IMR-90 (cell line): ENCODE measurements at regions of chr3 and their contacts with region 1.

Region 1: DNA sequence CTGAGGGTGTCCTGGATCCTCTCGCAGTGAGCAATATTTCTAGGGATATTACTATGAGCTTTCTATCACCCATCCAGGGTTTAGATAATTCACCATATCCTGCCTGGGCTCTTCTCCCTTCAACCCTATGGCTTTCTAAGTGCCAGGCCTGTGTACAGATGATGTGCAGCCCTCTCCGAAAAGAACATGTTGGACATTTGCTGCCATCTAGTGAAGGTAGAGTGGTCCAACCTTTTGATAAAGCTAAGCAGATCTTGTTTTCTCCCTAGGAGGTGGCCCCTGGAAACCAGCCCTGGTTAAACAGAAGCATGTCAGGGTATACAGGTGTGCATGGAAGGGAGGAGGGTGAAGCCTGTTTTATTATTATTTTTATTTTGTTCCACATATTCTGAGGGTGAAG is 27.9 kb upstream of the SCN10A start:
- DNase-seq: peak; percentile 70
- ATAC-seq: peak; percentile 97
- H3K4me3 ChIP-seq: no peak overlapping the region
- H3K27ac ChIP-seq: no peak overlapping the region
- H3K4me1 ChIP-seq: no peaks in the 10 kb centered on the region
- H3K27me3 ChIP-seq: peaks cover 12% of the 10 kb centered on the region
- CTCF ChIP-seq: peak; percentile 76
- POLR2A ChIP-seq: no peak
- RAD21 ChIP-seq: peak; percentile 88

Region 2: GRCh38 chr3:38346587-38347410 is 497.1 kb before region 1 on chr3 and contains the start of gene XYLB:
- CTCF ChIA-PET with region 1: no interaction called
- POLR2A ChIA-PET with region 1: no interaction called
- dilution Hi-C with region 1: no loop called
- in situ Hi-C with region 1: no loop called
- intact Hi-C with region 1: loop called (anchors 5 kb)
- DNase-seq: peak; percentile 72
- ATAC-seq: peak; percentile 99
- H3K4me3 ChIP-seq: peak within 1 kb of the TSS; percentile 83
- H3K27ac ChIP-seq: peak within 1 kb of the TSS; percentile 30; the same call in 1 of the 2 replicates
- H3K4me1 ChIP-seq: no peaks in the 10 kb centered on the region
- H3K27me3 ChIP-seq: no peaks in the 10 kb centered on the region
- CTCF ChIP-seq: peak; percentile 85
- POLR2A ChIP-seq: no peak
- RAD21 ChIP-seq: peak; percentile 59
- total RNA-seq, gene XYLB: 2.5 and 3.0 TPM in 2 replicates

Region 3: DNA sequence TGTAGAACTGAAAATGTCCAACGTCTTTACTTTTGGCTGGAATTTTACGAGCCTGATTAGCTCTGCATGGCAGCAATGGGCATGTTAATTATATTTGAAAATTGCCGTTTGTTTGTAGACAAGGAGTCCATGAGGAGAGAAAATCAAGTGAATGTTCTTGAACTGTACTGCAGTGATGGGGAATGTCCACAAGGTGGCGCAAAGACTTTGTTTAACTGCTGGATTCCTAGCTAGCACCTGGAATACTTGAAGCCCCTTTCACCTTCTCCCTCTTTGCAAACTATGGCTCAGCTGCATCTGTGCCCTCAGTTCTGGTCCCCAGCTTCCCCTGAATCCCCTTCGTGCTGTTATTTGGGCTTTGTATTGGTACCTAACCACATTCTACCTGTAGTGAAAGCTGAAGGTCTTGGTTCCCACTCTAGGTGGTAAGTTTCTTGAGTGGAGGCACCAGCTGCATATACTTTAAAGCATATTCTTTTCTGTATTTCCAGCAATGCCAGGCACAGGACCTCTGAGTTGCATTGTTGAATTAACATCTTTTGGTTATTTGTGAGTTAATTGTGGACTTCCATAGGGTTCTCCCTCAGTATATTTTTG is 322.4 kb before region 1 on chr3:
- CTCF ChIA-PET with region 1: interaction called, 20 read pairs
- POLR2A ChIA-PET with region 1: no interaction called
- dilution Hi-C with region 1: no loop called
- in situ Hi-C with region 1: loop called (anchors 5 kb)
- intact Hi-C with region 1: loop called (anchors 1 kb)
- DNase-seq: peak; percentile 75
- ATAC-seq: peak; percentile 67
- H3K4me3 ChIP-seq: no peak overlapping the region
- H3K27ac ChIP-seq: no peak overlapping the region
- H3K4me1 ChIP-seq: peaks cover 5% of the 10 kb centered on the region
- H3K27me3 ChIP-seq: no peaks in the 10 kb centered on the region
- CTCF ChIP-seq: peak; percentile 84
- POLR2A ChIP-seq: no peak
- RAD21 ChIP-seq: peak; percentile 75

Region 4: GRCh38 chr3:38689774-38690173 is 154.1 kb before region 1 on chr3:
- CTCF ChIA-PET with region 1: interaction called, 3 read pairs
- POLR2A ChIA-PET with region 1: no interaction called
- dilution Hi-C with region 1: no loop called
- in situ Hi-C with region 1: no loop called
- intact Hi-C with region 1: loop called (anchors 5 kb)
- DNase-seq: peak; percentile 17
- ATAC-seq: peak; percentile 51; the same call in 1 of the 2 replicates
- H3K4me3 ChIP-seq: no peak overlapping the region
- H3K27ac ChIP-seq: no peak overlapping the region
- H3K4me1 ChIP-seq: no peaks in the 10 kb centered on the region; the same call in 1 of the 2 replicates
- H3K27me3 ChIP-seq: peaks cover 2% of the 10 kb centered on the region; the same call in 1 of the 2 replicates
- CTCF ChIP-seq: peak; percentile 25; the same call in 1 of the 2 replicates
- POLR2A ChIP-seq: no peak
- RAD21 ChIP-seq: no peak

Region 5: GRCh38 chr3:39000008-39000450 is 156.1 kb after region 1 on chr3:
- CTCF ChIA-PET with region 1: interaction called, 13 read pairs
- POLR2A ChIA-PET with region 1: no interaction called
- dilution Hi-C with region 1: no loop called
- in situ Hi-C with region 1: no loop called
- intact Hi-C with region 1: loop called (anchors 2 kb)
- DNase-seq: peak; percentile 79
- ATAC-seq: peak; percentile 78
- H3K4me3 ChIP-seq: no peak overlapping the region
- H3K27ac ChIP-seq: no peak overlapping the region
- H3K4me1 ChIP-seq: peaks cover 1% of the 10 kb centered on the region; the same call in 1 of the 2 replicates
- H3K27me3 ChIP-seq: no peaks in the 10 kb centered on the region
- CTCF ChIP-seq: peak; percentile 99
- POLR2A ChIP-seq: peak; percentile 29; the same call in 1 of the 2 replicates
- RAD21 ChIP-seq: peak; percentile 87